Upper lobe of right lung (tissue), 1 donor: ENCODE measurements at regions of chr20 and their contacts with region 1.

Region 1: DNA sequence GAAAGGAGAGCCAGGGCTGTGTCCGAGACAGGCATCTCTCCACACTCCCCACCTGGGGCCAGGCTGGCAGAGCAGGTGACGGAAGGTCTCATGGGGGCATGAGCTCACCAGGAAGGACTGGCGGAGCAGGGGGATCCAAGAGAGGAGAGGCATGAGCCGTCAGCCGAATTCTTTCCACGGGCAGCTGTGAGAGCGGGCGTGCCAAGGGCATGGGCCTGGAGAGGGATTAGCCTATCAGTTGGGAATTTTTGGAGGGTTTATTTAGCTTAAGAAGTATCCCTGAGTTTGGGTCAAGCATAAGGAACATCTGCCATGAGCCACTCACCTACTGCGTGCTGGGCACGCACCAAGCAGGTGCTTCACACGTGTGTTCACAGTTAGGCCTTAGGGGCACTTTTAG is 60.2 kb upstream of the ZNFX1 start:
- DNase-seq: no peak
- ATAC-seq: no peak
- H3K4me3 ChIP-seq: no peak overlapping the region
- H3K27ac ChIP-seq: no peak overlapping the region
- H3K4me1 ChIP-seq: no peaks in the 10 kb centered on the region
- H3K27me3 ChIP-seq: peaks cover 10% of the 10 kb centered on the region
- CTCF ChIP-seq: no peak

Region 2: DNA sequence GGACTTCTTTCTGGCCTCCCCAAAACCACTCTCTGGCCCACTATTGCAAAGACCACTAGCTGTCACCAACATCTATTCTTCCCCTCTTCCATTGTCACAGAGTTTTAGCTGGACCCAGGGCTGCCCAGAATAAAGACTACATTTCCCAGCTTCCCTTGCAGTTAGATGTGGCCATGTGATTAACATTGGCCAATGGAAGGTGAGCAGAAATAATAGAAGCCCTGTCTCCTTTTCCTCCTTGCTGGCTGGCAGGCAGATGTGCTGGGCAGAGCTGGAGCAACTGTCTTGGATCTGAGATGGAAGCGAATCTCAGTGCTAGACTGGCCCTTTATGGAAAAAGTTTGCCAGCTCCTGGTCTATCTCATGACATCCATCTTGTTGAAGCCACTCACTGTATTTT is 47.4 kb after region 1 on chr20:
- intact Hi-C with region 1: no loop called
- DNase-seq: no peak
- ATAC-seq: peak; percentile 51
- H3K4me3 ChIP-seq: no peak overlapping the region
- H3K27ac ChIP-seq: no peak overlapping the region
- H3K4me1 ChIP-seq: no peaks in the 10 kb centered on the region
- H3K27me3 ChIP-seq: no peaks in the 10 kb centered on the region
- CTCF ChIP-seq: no peak

Region 3: GRCh38 chr20:49484180-49485140 is 146.4 kb after region 1 on chr20:
- intact Hi-C with region 1: loop called (anchors 10 kb)
- DNase-seq: peak; percentile 83
- ATAC-seq: peak; percentile 84
- H3K4me3 ChIP-seq: peak overlapping the region; percentile 43
- H3K27ac ChIP-seq: no peak overlapping the region
- H3K4me1 ChIP-seq: peaks cover 9% of the 10 kb centered on the region
- H3K27me3 ChIP-seq: peaks cover 76% of the 10 kb centered on the region
- CTCF ChIP-seq: peak; percentile 65

Region 4: GRCh38 chr20:49534255-49534712 is 196.2 kb after region 1 on chr20:
- intact Hi-C with region 1: loop called (anchors 10 kb)
- DNase-seq: no peak
- ATAC-seq: peak; percentile 89
- H3K4me3 ChIP-seq: no peak overlapping the region
- H3K27ac ChIP-seq: no peak overlapping the region
- H3K4me1 ChIP-seq: no peaks in the 10 kb centered on the region
- H3K27me3 ChIP-seq: no peaks in the 10 kb centered on the region
- CTCF ChIP-seq: peak; percentile 85